K562 (cell line): ENCODE measurements at regions of chr6 and their contacts with region 1.

Region 1: GRCh38 chr6:133568970-133569889 is 319.7 kb upstream of the TCF21 start:
- DNase-seq: peak; percentile 44 to 63 (median 52)
- ATAC-seq: peak; percentile 93
- H3K4me3 ChIP-seq: no peak overlapping the region
- H3K27ac ChIP-seq: no peak overlapping the region
- H3K4me1 ChIP-seq: no peaks in the 10 kb centered on the region; a peak in 1 of 5 replicates
- H3K27me3 ChIP-seq: no peaks in the 10 kb centered on the region; a peak in 1 of 5 replicates
- CTCF ChIP-seq: peak; percentile 71 to 85 (median 72); a peak in 5 of 6 replicates
- EP300 ChIP-seq: no peak
- POLR2A ChIP-seq: no peak
- RAD21 ChIP-seq: peak; percentile 93 to 97

Region 2: GRCh38 chr6:131909408-131910218 is 1659.6 kb before region 1 on chr6:
- CTCF ChIA-PET with region 1: no interaction called
- POLR2A ChIA-PET with region 1: no interaction called
- in situ Hi-C with region 1: loop called (anchors 25 kb)
- intact Hi-C with region 1: no loop called
- DNase-seq: peak; percentile 52 to 77 (median 64)
- ATAC-seq: peak; percentile 99
- H3K4me3 ChIP-seq: no peak overlapping the region
- H3K27ac ChIP-seq: no peak overlapping the region
- H3K4me1 ChIP-seq: no peaks in the 10 kb centered on the region
- H3K27me3 ChIP-seq: no peaks in the 10 kb centered on the region; a peak in 1 of 5 replicates
- CTCF ChIP-seq: peak; percentile 71 to 84 (median 78)
- EP300 ChIP-seq: no peak
- POLR2A ChIP-seq: no peak
- RAD21 ChIP-seq: peak; percentile 81 to 85

Region 3: GRCh38 chr6:133827766-133828165 is 258.5 kb after region 1 on chr6:
- CTCF ChIA-PET with region 1: no interaction called
- POLR2A ChIA-PET with region 1: no interaction called
- in situ Hi-C with region 1: loop called (anchors 10 kb)
- intact Hi-C with region 1: no loop called
- DNase-seq: no peak
- ATAC-seq: no peak
- H3K4me3 ChIP-seq: no peak overlapping the region
- H3K27ac ChIP-seq: no peak overlapping the region
- H3K4me1 ChIP-seq: no peaks in the 10 kb centered on the region
- H3K27me3 ChIP-seq: no peaks in the 10 kb centered on the region; a peak in 1 of 5 replicates
- CTCF ChIP-seq: no peak
- EP300 ChIP-seq: no peak
- POLR2A ChIP-seq: no peak
- RAD21 ChIP-seq: no peak

Region 4: GRCh38 chr6:133916650-133917151 is 347.5 kb after region 1 on chr6:
- CTCF ChIA-PET with region 1: interaction called, 25 read pairs
- POLR2A ChIA-PET with region 1: interaction called, 3 read pairs
- in situ Hi-C with region 1: loop called (anchors 5 kb)
- intact Hi-C with region 1: loop called (anchors 1 kb)
- DNase-seq: peak; percentile 68 to 89 (median 71)
- ATAC-seq: peak; percentile 94
- H3K4me3 ChIP-seq: no peak overlapping the region
- H3K27ac ChIP-seq: no peak overlapping the region
- H3K4me1 ChIP-seq: no peaks in the 10 kb centered on the region
- H3K27me3 ChIP-seq: no peaks in the 10 kb centered on the region; a peak in 1 of 5 replicates
- CTCF ChIP-seq: peak; percentile 88 to 92 (median 92)
- EP300 ChIP-seq: no peak
- POLR2A ChIP-seq: no peak
- RAD21 ChIP-seq: peak; percentile 90 to 92

Region 5: DNA sequence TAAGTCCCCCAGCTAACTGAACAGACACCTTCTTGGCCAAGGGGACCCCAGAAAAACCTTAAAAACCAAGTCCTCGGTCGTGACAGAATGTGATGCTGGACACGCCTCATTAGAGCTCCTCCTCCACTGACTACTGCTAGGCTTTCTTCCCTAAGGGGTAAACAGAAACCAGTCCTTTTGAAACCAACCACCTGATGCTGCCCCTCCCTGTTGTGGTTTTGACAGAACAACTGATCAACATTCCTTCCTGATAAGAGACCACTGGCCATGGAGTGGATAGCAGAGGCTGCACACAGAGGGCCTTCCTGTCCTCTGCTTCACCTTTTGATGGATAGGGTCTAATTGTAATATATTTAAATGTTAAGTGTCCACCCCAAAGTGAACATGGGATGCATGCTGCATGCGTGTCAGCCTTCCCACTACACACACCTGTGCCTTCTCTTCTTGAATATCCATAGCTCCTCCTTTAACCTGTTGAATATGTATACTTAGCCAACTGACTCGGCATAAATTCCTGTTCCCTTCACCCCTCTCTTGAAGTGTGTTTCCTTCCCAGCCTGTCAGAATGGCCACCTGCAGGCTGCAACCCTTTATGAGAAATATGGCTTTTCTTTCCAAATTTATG is 511.1 kb after region 1 on chr6:
- CTCF ChIA-PET with region 1: no interaction called
- POLR2A ChIA-PET with region 1: no interaction called
- in situ Hi-C with region 1: loop called (anchors 5 kb)
- intact Hi-C with region 1: no loop called
- DNase-seq: peak in 1 of 4 experiments; percentile 54
- ATAC-seq: peak; percentile 68
- H3K4me3 ChIP-seq: no peak overlapping the region
- H3K27ac ChIP-seq: no peak overlapping the region
- H3K4me1 ChIP-seq: peaks cover 0 to 13% of the 10 kb centered on the region in 2 experiments; a peak in 4 of 5 replicates
- H3K27me3 ChIP-seq: no peaks in the 10 kb centered on the region
- CTCF ChIP-seq: no peak
- EP300 ChIP-seq: peak; percentile 64; the same call in 1 of the 2 replicates
- POLR2A ChIP-seq: no peak
- RAD21 ChIP-seq: no peak